ENCODE measurements at regions of chr16 and their contacts with region 1.

Region 1: DNA sequence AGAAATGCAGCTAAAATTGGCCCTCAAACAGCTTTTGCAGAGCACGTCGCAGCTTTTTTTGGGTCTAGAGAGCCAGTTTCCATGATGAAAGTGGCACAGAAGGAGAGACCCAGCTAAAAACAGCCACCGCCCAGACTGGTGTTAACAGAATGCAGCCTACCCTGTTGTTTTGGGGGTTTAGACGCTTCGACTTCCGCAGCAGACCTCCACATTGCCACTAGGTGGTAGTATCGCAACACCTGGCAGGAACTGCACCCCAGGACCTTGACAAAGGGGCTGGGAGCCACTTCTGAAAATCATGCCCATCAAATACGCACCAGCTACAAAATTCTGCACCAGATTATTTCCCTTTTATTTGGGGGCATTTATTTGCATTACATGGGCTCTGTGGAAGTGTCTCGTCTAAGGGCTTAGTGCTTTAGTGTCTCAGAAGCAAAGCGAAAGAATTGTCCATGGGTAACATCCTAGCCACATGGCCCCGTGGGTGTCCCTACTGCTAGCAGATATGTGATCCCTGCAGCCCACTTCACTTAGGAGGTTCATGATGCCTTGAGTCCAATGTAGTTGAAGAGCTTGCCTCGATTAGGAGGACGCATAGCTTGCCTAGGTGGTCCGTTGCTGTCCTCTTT is 167.1 kb downstream of the HAPSTR1 start:
- DNase-seq: no peak
- ATAC-seq: no peak
- H3K4me3 ChIP-seq: no peak overlapping the region
- H3K27ac ChIP-seq: no peak overlapping the region
- H3K4me1 ChIP-seq: no peaks in the 10 kb centered on the region
- H3K27me3 ChIP-seq: peaks cover 0 to 2% (median 0%) of the 10 kb centered on the region in 3 donors
- CTCF ChIP-seq: peak in 4 of 5 experiments; percentile 16 to 43 (median 34)
- POLR2A ChIP-seq: no peak

Region 2: GRCh38 chr16:9441012-9441411 is 182.5 kb after region 1 on chr16:
- in situ Hi-C with region 1: no loop called
- intact Hi-C with region 1: no loop called
- DNase-seq: no peak
- ATAC-seq: no peak
- H3K4me3 ChIP-seq: no peak overlapping the region
- H3K27ac ChIP-seq: no peak overlapping the region
- H3K4me1 ChIP-seq: no peaks in the 10 kb centered on the region
- H3K27me3 ChIP-seq: no peaks in the 10 kb centered on the region
- CTCF ChIP-seq: no peak
- POLR2A ChIP-seq: no peak

Region 3: DNA sequence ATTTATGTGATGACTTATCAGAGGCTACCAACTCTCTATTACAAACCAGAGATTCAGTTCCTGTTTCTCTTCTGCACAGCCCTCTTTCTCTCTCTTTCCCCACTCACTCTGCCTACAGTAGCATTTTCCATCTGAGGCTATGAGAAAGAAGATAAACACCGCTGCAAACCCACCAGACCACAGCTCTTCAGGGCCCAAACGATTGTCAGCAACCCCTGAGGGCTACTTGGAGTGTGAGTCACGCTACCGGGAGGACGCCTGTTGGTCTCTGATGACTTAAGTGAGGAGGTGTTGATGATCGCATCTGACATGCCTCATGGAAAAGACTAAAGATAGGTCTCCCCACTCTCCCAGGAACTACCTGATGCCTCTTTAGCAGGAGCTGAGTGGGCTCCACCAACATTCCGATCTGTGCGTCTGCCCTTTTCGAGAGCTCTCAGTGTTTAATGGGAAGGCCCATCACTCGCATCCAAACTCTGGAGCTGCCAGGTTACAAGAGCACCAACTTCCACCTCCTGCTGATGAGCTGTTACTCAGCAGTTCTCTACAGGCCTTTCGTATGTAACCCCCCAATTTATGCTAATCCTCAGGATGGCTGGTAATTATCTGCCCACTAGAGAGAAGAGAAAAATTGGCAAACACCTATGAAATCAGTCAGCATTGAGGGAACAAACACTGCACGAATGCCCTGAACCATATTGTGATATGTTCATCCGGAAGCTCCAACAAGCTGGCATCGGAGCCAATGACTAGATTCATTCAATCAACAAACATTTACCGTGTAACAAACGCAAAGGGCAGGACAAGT is 914.5 kb after region 1 on chr16:
- in situ Hi-C with region 1: loop called in 2 of 4 experiments (anchors 25 kb)
- intact Hi-C with region 1: no loop called
- DNase-seq: no peak
- ATAC-seq: no peak
- H3K4me3 ChIP-seq: no peak overlapping the region
- H3K27ac ChIP-seq: no peak overlapping the region
- H3K4me1 ChIP-seq: no peaks in the 10 kb centered on the region
- H3K27me3 ChIP-seq: no peaks in the 10 kb centered on the region
- CTCF ChIP-seq: no peak
- POLR2A ChIP-seq: no peak